ENCODE measurements at regions of chr6 and their contacts with region 1.

Region 1: GRCh38 chr6:31271641-31272357 is at the start of gene HLA-C:
- H3K4me3 Mint-ChIP-seq: peak within 1 kb of the TSS; percentile 94
- H3K27ac Mint-ChIP-seq: peak within 1 kb of the TSS; percentile 90
- H3K4me1 Mint-ChIP-seq: peaks cover 55% of the 10 kb centered on the region
- H3K27me3 Mint-ChIP-seq: peaks cover 14% of the 10 kb centered on the region

Region 2: GRCh38 chr6:31180502-31180901 is 91.3 kb before region 1 on chr6:
- intact Hi-C with region 1: no loop called
- H3K4me3 Mint-ChIP-seq: peak overlapping the region; percentile 81
- H3K27ac Mint-ChIP-seq: peak overlapping the region; percentile 83
- H3K4me1 Mint-ChIP-seq: peaks cover 20% of the 10 kb centered on the region
- H3K27me3 Mint-ChIP-seq: no peaks in the 10 kb centered on the region

Region 3: DNA sequence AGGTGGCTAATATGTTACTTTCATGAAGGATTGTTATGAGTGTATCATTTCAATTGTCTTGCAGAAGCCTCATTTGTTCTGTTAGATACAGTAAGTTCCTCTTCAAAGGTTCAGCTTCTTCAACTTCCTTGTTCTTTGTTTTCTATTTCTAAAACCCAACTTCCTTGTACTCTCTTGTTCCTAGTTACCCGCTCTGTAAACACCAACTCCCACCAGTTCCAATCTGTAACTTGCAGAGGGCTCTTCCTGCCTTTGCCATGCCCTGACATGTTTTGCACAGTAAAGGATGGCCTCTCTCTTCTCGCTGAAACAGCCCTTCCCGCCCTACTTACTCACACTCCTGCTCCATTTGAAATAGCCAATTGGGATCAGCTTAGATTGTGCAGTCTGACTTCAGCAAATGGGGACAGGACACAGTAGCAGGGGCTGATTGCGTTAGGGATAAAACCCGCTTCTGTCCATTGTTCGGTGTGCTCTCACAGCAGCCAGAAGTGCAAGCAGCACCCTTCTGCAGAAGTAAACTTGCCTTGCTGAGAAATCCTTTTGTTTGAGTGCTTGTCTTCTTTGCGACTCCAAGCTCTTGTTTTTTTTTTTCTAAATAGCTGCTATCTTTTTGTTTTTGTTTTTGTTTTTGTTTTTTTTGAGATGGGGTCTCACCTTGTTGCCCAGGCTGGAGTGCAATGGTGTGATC is 55.4 kb before region 1 on chr6:
- intact Hi-C with region 1: loop called (anchors 5 kb)
- H3K4me3 Mint-ChIP-seq: peak overlapping the region; percentile 9
- H3K27ac Mint-ChIP-seq: peak overlapping the region; percentile 95
- H3K4me1 Mint-ChIP-seq: peaks cover 13% of the 10 kb centered on the region
- H3K27me3 Mint-ChIP-seq: no peaks in the 10 kb centered on the region

Region 4: DNA sequence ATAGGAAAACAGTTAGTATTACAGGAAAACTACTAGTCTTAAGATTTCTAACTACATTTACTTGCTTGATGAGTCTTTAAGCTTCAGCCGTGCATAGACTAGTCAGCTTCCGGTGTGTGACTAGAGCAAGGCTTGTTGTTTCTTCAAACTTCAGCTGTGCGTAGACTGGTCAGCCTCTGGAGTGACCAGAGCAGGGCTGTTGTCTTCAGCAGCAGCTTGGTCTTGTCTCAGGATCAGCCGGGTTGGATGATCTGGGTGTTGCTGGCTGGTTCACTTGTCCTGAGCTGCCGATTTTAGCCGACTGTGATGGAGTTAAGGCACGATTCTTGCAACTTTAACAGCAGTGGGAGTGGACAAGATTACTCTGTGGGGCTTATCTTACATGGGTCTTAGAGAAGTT is 44.7 kb before region 1 on chr6:
- intact Hi-C with region 1: no loop called
- H3K4me3 Mint-ChIP-seq: no peak overlapping the region
- H3K27ac Mint-ChIP-seq: no peak overlapping the region
- H3K4me1 Mint-ChIP-seq: peaks cover 27% of the 10 kb centered on the region
- H3K27me3 Mint-ChIP-seq: peaks cover 8% of the 10 kb centered on the region

Region 5: DNA sequence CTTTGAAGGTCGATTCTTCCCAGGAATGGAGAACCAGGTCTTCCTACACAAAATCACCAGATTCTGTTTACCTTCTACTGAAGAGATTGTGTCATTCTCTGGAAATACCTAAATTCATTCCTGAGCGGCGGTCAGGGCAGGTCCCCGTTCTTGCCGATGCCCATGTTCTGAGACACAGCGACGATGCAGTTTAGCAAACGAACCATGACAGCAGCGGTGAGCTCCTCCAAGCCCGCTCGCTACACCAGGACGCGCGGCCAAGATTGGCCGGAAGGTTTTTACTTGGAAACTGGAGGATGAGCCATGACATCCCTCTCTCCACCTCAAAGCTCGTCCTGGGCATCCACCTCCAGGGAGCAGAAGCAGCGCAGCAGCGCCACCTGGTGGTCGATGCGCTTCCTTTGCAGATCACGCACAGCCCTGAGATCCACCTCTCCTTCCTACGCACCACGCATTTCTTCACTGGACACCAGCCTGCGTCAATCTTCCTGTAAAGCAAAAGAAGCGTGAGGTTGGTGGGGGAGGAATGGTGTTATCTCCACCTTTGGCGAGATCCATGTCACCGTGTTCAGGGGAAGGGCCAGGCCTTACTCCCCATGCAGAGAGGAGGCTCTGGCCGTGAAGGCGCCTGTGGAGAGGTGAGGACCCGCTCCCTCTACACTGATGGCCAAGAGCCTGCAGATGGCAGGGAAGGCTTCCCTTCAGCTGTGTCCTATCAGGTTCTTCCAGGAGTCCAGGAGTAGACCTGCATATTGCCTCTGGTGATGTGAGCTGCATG is 95.1 kb after region 1 on chr6:
- intact Hi-C with region 1: loop called (anchors 5 kb)
- H3K4me3 Mint-ChIP-seq: peak overlapping the region; percentile 60
- H3K27ac Mint-ChIP-seq: no peak overlapping the region
- H3K4me1 Mint-ChIP-seq: peaks cover 16% of the 10 kb centered on the region
- H3K27me3 Mint-ChIP-seq: peaks cover 37% of the 10 kb centered on the region

Measured in dendritic cell treated with granulocyte-macrophage colony-stimulating factor and Interleukin-4, amounts not matched to agents 40 ng/mL and 50 ng/mL, for 4 days (primary cell).